PC-3 (cell line): ENCODE measurements at regions of chr17 and their contacts with region 1.

Region 1: GRCh38 chr17:76726231-76726775 is at the start of gene JMJD6:
- DNase-seq: peak; percentile 97
- ATAC-seq: peak; percentile 88
- H3K4me3 ChIP-seq: peak within 1 kb of the TSS; percentile 85
- H3K27ac ChIP-seq: peak within 1 kb of the TSS; percentile 85
- H3K4me1 ChIP-seq: peaks cover 18% of the 10 kb centered on the region
- H3K27me3 ChIP-seq: no peaks in the 10 kb centered on the region
- CTCF ChIP-seq: no peak
- total RNA-seq, gene JMJD6: 39.0 and 49.8 TPM in 2 replicates

Region 2: GRCh38 chr17:76709077-76709950 is 17.0 kb before region 1 on chr17:
- CTCF ChIA-PET with region 1: no interaction called
- POLR2A ChIA-PET with region 1: interaction called, 12 read pairs
- intact Hi-C with region 1: loop called (anchors 1 kb)
- DNase-seq: peak; percentile 88
- ATAC-seq: peak; percentile 74
- H3K4me3 ChIP-seq: peak overlapping the region; percentile 73
- H3K27ac ChIP-seq: peak overlapping the region; percentile 64
- H3K4me1 ChIP-seq: peaks cover 25% of the 10 kb centered on the region
- H3K27me3 ChIP-seq: no peaks in the 10 kb centered on the region
- CTCF ChIP-seq: no peak

Region 3: GRCh38 chr17:76714822-76715495 is 11.3 kb before region 1 on chr17:
- CTCF ChIA-PET with region 1: no interaction called
- POLR2A ChIA-PET with region 1: no interaction called
- intact Hi-C with region 1: loop called (anchors 1 kb)
- DNase-seq: peak; percentile 87
- ATAC-seq: peak; percentile 11
- H3K4me3 ChIP-seq: no peak overlapping the region
- H3K27ac ChIP-seq: no peak overlapping the region
- H3K4me1 ChIP-seq: peaks cover 11% of the 10 kb centered on the region
- H3K27me3 ChIP-seq: no peaks in the 10 kb centered on the region
- CTCF ChIP-seq: peak; percentile 96

Region 4: GRCh38 chr17:76737082-76737675 is 10.9 kb after region 1 on chr17 and contains the start of gene SRSF2:
- CTCF ChIA-PET with region 1: no interaction called
- POLR2A ChIA-PET with region 1: interaction called, 5 read pairs
- intact Hi-C with region 1: loop called (anchors 1 kb)
- DNase-seq: peak; percentile 100
- ATAC-seq: peak; percentile 68
- H3K4me3 ChIP-seq: peak within 1 kb of the TSS; percentile 89
- H3K27ac ChIP-seq: peak within 1 kb of the TSS; percentile 89
- H3K4me1 ChIP-seq: peaks cover 37% of the 10 kb centered on the region
- H3K27me3 ChIP-seq: no peaks in the 10 kb centered on the region
- CTCF ChIP-seq: no peak
- total RNA-seq, gene SRSF2: 562 and 859 TPM in 2 replicates

Region 5: DNA sequence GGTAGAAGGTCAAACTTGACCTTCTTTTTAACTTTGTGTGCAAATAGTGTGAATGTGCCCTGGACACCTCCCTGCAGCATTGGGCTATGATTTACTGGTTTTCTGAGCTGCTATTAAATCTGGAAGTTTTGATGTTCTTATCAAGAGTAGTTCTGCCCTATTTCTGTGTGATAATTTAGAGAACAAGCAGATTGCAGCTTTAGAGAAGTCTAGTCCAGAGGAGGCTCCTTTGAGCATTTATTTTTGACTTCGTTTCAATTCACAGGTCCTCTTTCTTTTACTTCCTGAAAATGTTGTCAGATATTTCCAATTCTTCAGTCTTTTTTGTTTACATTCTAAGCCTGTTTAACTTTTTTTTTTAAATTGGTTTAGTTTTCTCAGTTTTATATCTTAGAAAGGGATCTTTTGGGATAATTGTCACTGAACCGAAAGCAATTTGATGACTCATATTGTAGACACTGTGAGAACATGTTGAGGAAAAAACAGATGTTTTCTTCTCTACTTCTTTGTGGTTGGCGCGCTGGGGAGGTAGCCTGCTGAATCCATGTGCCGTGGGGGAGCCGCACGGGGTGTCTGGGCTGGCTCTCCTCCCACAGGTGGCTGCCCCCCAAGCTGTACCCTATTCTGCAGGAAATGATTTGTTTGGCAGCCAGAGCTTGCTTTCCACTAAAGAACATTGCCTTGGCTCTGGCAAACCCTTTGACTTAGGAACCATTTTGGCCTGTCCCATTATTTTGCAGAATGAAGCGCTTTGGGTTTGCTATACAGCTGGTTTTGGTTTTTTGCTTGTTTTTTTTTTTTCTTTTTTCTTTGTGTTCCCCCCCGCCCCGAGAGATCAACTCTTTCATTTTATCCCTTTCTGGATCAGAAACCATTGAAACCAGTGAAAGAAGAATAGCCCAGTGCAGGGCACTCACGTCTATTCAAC is 65.0 kb after region 1 on chr17:
- CTCF ChIA-PET with region 1: interaction called, 12 read pairs
- POLR2A ChIA-PET with region 1: no interaction called
- intact Hi-C with region 1: no loop called
- DNase-seq: peak; percentile 83
- ATAC-seq: peak; percentile 84
- H3K4me3 ChIP-seq: peak overlapping the region; percentile 27; the same call in 1 of the 2 replicates
- H3K27ac ChIP-seq: peak overlapping the region; percentile 51
- H3K4me1 ChIP-seq: peaks cover 24% of the 10 kb centered on the region
- H3K27me3 ChIP-seq: no peaks in the 10 kb centered on the region
- CTCF ChIP-seq: no peak

Region 6: GRCh38 chr17:77066165-77066564 is 339.9 kb after region 1 on chr17:
- CTCF ChIA-PET with region 1: interaction called, 12 read pairs
- POLR2A ChIA-PET with region 1: interaction called, 3 read pairs
- intact Hi-C with region 1: no loop called
- DNase-seq: no peak
- ATAC-seq: 0 out of 2 replicates have a peak, but pooled peaks have one; percentile 7
- H3K4me3 ChIP-seq: no peak overlapping the region
- H3K27ac ChIP-seq: no peak overlapping the region
- H3K4me1 ChIP-seq: peaks cover 9% of the 10 kb centered on the region
- H3K27me3 ChIP-seq: no peaks in the 10 kb centered on the region
- CTCF ChIP-seq: no peak